Activated CD8-positive, alpha-beta memory T cell treated with anti-CD3 and anti-CD28 coated beads, Interleukin-2, amount 10 ng/mL, durations not matched to agents 7 days and 5 days (primary cell): ENCODE measurements at regions of chr2 and their contacts with region 1.

Region 1: DNA sequence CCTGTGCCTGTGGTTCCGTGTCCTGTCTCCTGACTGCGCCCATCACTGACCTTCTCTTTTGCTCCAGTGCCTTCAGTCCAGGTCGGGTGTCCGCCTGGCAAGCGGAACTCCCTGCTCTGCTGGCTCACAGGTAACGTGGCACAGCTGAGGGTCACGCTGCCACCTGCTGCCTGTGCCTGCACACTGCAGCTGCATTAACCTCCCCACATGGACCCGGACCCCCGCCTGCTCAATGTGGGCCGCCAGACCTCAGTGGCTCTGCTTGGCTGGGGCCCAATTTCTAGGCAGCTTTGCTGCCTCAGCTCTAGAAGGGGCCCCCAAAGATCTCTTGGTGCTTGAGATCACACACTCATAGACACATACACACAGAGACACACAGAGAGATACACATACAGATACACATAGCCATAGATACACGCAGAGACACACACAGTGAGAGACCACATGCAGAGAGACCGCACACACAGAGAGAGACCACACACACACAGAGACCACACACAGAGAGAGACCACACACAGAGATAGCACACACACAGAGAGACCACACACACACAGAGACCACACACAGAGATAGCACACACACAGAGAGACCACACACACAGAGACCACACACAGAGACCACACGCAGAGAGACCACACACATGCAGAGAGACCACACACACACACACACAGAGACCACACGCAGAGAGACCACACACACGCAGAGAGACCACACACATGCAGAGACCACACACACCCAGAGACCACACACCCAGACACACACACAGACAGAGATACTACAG is 14.9 kb upstream of the CNNM3 start:
- DNase-seq: peak; percentile 83
- ATAC-seq: peak; percentile 92
- H3K4me3 Mint-ChIP-seq: no peak overlapping the region
- H3K27ac Mint-ChIP-seq: no peak overlapping the region
- H3K4me1 Mint-ChIP-seq: peaks cover 4% of the 10 kb centered on the region
- H3K27me3 Mint-ChIP-seq: no peaks in the 10 kb centered on the region

Region 2: DNA sequence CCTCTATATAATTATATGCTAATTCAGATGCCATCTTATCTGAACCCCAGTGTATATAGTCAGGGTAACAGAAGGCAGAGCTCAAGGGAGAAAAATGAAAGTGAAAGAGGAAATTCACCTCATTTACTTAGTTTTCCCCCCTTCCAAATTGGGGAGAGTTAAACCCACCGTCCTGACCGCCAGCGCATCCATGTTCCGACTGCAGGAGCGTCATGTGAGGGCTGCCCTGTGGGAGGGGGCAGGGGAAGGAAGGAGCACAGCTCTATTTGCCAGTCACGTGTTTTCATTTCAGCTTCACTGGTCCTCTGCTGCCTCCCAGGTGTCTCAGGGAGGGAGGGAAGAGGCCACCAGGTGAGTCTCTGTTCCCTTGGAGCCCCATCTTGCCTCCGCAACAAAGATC is 27.3 kb before region 1 on chr2:
- CTCF ChIA-PET with region 1: interaction called, 10 read pairs
- DNase-seq: peak; percentile 75
- ATAC-seq: peak; percentile 73
- H3K4me3 Mint-ChIP-seq: peak overlapping the region; percentile 58
- H3K27ac Mint-ChIP-seq: peak overlapping the region; percentile 89
- H3K4me1 Mint-ChIP-seq: peaks cover 28% of the 10 kb centered on the region
- H3K27me3 Mint-ChIP-seq: no peaks in the 10 kb centered on the region

Region 3: GRCh38 chr2:96816128-96816835 is 15.1 kb after region 1 on chr2 and contains the start of gene CNNM3:
- CTCF ChIA-PET with region 1: interaction called, 17 read pairs
- DNase-seq: peak; percentile 96
- ATAC-seq: peak; percentile 94
- H3K4me3 Mint-ChIP-seq: peak within 1 kb of the TSS; percentile 84
- H3K27ac Mint-ChIP-seq: peak within 1 kb of the TSS; percentile 58
- H3K4me1 Mint-ChIP-seq: peaks cover 47% of the 10 kb centered on the region
- H3K27me3 Mint-ChIP-seq: no peaks in the 10 kb centered on the region
- total RNA-seq, gene CNNM3: 28.0 to 30.5 TPM